Activated CD8-positive, alpha-beta T cell treated with anti-CD3 and anti-CD28 coated beads, Interleukin-2, amount 10 ng/mL, durations not matched to agents 7 days and 5 days (primary cell): ENCODE measurements at regions of chr20 and their contacts with region 1.

Region 1: GRCh38 chr20:31560094-31560899 is 44.8 kb upstream of the ID1 start:
- DNase-seq: peak; percentile 85
- ATAC-seq: peak; percentile 71
- H3K4me3 Mint-ChIP-seq: no peak overlapping the region
- H3K27ac Mint-ChIP-seq: peak overlapping the region; percentile 78
- H3K4me1 Mint-ChIP-seq: peaks cover 24% of the 10 kb centered on the region
- H3K27me3 Mint-ChIP-seq: no peaks in the 10 kb centered on the region

Region 2: DNA sequence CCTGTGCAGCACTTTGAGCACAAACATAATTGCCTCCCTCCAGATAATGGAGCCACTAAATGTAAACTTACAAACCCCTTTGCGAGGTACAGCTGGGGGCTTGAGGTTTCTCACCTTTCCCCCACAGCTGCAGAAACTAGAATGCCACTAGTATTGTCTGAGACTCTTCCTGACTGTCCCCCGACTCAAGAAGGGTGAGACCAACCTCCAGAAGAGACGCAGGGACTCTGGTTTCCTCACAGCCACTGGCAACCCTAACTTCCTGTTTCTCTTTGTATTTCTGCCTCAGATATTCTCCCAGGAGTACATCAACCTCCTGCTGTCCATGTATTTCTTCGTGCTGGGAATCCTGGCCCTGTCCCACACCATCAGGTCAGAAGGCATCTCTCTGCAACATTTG is 22.4 kb before region 1 on chr20:
- CTCF ChIA-PET with region 1: interaction called, 16 read pairs
- POLR2A ChIA-PET with region 1: no interaction called
- DNase-seq: no peak
- ATAC-seq: no peak
- H3K4me3 Mint-ChIP-seq: peak overlapping the region; percentile 46
- H3K27ac Mint-ChIP-seq: peak overlapping the region; percentile 91
- H3K4me1 Mint-ChIP-seq: peaks cover 65% of the 10 kb centered on the region
- H3K27me3 Mint-ChIP-seq: no peaks in the 10 kb centered on the region

Region 3: GRCh38 chr20:31547017-31547675 is 13.2 kb before region 1 on chr20:
- CTCF ChIA-PET with region 1: interaction called, 45 read pairs
- POLR2A ChIA-PET with region 1: interaction called, 3 read pairs
- DNase-seq: peak; percentile 87
- ATAC-seq: peak; percentile 79
- H3K4me3 Mint-ChIP-seq: peak overlapping the region; percentile 87
- H3K27ac Mint-ChIP-seq: peak overlapping the region; percentile 98
- H3K4me1 Mint-ChIP-seq: peaks cover 30% of the 10 kb centered on the region
- H3K27me3 Mint-ChIP-seq: no peaks in the 10 kb centered on the region

Region 4: GRCh38 chr20:31572701-31573554 is 12.6 kb after region 1 on chr20:
- CTCF ChIA-PET with region 1: interaction called, 130 read pairs
- POLR2A ChIA-PET with region 1: interaction called, 6 read pairs
- DNase-seq: peak; percentile 91
- ATAC-seq: peak; percentile 92
- H3K4me3 Mint-ChIP-seq: peak overlapping the region; percentile 85
- H3K27ac Mint-ChIP-seq: peak overlapping the region; percentile 88
- H3K4me1 Mint-ChIP-seq: peaks cover 27% of the 10 kb centered on the region
- H3K27me3 Mint-ChIP-seq: peaks cover under 1% of the 10 kb centered on the region

Region 5: DNA sequence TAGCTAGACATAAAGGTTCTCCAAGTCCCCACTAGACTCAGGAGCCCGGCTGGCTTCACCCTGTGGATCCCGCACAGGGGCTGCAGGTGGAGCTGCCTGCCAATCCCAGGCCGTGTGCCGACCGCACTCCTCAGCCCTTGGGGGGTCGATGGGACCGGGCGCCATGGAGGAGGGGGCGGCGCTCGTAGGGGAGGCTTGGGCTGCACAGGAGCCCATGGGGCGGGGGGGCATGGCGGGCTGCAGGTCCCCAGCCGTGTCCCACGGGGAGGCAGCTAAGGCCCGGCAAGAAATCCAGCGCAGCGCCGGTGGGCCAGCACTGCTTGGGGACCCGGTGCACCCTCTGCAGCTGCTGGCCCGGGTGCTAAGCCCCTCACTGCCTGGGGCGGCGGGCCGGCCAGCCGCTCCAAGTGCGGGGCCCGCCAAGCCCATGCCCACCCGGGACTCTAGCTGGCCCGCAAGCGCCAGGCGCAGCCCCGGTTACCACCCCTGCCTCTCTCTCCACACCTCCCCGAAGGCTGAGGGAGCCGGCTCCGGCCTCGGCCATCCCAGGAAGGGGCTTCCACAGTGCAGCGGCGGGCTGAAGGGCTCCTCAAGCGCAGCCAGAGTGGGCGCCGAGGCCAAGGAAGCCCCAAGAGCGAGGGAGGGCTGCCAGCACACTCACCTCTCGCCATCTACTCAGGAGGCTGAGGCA is 18.3 kb after region 1 on chr20:
- CTCF ChIA-PET with region 1: interaction called, 130 read pairs
- POLR2A ChIA-PET with region 1: interaction called, 6 read pairs
- DNase-seq: no peak
- ATAC-seq: no peak
- H3K4me3 Mint-ChIP-seq: no peak overlapping the region
- H3K27ac Mint-ChIP-seq: no peak overlapping the region
- H3K4me1 Mint-ChIP-seq: peaks cover 18% of the 10 kb centered on the region
- H3K27me3 Mint-ChIP-seq: peaks cover 4% of the 10 kb centered on the region

Region 6: DNA sequence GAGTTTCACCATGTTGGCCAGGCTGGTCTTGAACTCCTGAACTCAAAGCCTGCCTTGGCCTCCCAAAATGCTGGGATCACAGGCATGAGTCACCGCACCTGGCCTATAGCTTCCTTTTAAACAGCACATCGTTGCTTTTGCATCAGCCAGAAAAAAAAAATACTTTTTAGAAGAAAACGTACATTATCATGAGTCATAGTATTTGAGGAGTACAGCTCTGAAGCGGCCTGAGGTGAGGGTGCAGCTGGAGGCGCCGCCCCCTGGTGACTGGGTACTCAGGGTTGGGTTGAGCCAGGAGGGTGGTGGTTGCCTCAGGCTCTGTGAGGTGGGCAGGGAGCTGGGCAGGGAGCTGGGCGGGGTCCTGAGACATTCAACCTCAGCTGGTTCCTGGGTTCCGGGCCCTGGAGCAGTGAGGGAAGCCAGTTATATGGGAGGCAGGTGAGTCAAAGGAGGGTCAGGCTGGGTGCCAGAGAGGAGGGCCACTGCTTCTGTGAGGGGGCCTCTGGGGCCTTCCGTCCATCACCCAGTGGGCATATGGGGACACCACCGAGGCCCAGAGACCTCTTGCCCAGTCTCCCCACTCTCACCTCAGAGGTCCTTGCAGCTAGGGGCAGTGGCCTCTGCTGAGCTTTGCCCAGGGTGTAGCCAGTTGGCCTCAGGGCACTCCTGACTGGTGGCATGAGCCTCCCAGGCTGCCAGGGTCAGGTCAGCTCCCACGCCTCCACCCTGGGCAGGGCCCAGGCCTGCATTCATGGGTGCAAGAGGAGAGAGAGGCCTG is 33.1 kb after region 1 on chr20:
- CTCF ChIA-PET with region 1: interaction called, 11 read pairs
- POLR2A ChIA-PET with region 1: no interaction called
- DNase-seq: no peak
- ATAC-seq: no peak
- H3K4me3 Mint-ChIP-seq: no peak overlapping the region
- H3K27ac Mint-ChIP-seq: no peak overlapping the region
- H3K4me1 Mint-ChIP-seq: peaks cover under 1% of the 10 kb centered on the region
- H3K27me3 Mint-ChIP-seq: peaks cover 13% of the 10 kb centered on the region